Motor neuron (in vitro differentiated cells): ENCODE measurements at regions of chr1 and their contacts with region 1.

Region 1: DNA sequence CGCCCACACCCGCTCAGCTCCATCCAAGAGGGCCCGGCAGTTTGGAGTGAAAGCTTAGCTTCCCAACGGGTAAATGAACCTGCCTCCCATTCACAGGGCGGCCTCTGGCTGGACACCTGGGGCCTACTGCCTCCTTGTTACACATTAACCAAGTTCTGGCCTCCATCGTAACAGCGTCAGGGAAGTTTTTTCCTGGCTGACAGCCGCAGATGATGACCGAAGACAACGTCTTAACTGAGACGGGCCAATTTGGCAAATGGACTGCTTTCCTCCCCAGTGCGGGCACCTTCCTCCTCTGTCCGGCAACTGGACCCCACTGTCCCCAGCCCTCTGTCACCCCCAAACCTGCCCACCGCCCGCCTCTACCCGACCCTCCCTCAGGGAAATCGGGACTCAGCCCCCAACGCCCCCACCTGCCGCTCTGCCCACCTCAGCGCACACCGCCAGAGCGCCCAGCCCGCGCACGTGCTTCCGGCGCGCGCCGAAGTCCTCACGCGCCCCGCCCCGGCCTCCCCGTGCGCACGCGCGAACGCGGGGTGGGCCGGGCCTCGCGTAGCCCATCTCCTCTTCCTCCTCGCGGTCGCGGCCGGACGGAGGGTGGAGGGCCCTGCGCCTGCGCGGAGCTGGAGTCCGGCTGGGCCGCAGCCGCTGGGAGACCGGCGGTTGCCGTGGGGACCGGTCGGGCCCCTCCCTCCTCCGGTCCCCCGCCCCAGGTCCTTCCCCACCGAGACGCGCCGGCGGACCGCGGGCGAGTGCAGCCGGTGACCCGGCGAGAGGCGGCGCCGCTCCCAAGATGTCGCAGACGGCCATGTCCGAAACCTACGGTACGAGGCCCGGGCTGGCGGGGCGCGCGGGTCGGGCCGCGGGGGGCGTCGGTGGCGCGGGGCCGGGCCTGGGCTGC is at the start of gene RAB4A:
- ATAC-seq: peak; percentile 92 to 97 (median 95)
- H3K4me3 ChIP-seq: peak within 1 kb of the TSS; percentile 65 to 81 (median 75)
- H3K27ac ChIP-seq: peak within 1 kb of the TSS; percentile 44 to 74
- H3K4me1 ChIP-seq: peaks cover 17 to 20% of the 10 kb centered on the region in 2 donors
- total RNA-seq, gene RAB4A: 12.9 to 51.6 (median 35.3) TPM

Region 2: GRCh38 chr1:229452956-229453801 is 182.4 kb after region 1 on chr1:
- in situ Hi-C with region 1: loop called in 1 of 9 experiments (anchors 25 kb)
- ATAC-seq: peak in 1 of 8 experiments; percentile 22
- H3K4me3 ChIP-seq: no peak overlapping the region
- H3K27ac ChIP-seq: no peak overlapping the region
- H3K4me1 ChIP-seq: no peaks in the 10 kb centered on the region

Region 3: DNA sequence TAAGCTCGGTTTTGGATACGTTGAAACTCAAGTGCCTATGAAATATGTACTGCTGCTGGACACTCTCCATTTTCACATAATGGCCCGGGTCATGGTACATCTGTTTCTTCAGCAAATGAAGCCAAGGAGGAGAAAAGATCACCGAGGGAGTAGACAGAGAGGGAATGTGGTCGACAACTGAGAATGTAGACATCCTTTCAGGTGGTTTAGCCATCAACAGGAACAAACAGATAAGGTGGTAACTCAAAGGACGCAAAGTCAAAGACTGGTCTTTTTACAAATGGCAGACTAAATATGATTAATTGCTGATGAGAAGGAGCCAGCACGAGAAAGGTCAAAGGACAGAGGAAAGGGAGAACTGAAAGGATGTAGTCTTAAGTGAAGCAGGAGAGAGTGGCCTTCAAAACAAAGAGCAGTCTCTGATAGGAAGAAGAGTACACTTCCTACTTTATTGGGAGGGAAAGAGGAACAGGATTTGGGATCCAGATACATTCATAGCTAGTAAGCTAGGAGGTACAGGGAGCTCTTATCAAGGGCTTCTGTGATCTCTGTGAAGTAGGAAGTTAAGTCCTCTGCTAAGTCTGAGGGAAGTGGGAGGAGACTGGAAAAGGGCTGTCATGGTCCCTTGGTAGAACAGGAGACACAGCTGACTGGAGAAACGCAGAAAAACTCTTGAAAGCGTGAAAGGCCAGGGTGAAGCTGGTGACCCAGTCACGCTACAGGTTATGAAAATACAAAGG is 209.0 kb after region 1 on chr1:
- in situ Hi-C with region 1: loop called in 5 of 9 experiments (anchors 10 to 25 kb)
- ATAC-seq: no peak
- H3K4me3 ChIP-seq: no peak overlapping the region
- H3K27ac ChIP-seq: no peak overlapping the region
- H3K4me1 ChIP-seq: no peaks in the 10 kb centered on the region

Region 4: GRCh38 chr1:229507951-229508822 is 237.4 kb after region 1 on chr1 and contains the start of gene NUP133:
- in situ Hi-C with region 1: loop called in 3 of 9 experiments (anchors 25 kb)
- ATAC-seq: peak; percentile 90 to 98 (median 97)
- H3K4me3 ChIP-seq: peak within 1 kb of the TSS; percentile 93 to 99 (median 95)
- H3K27ac ChIP-seq: peak within 1 kb of the TSS; percentile 91 to 94
- H3K4me1 ChIP-seq: peaks cover 13 to 16% of the 10 kb centered on the region in 2 donors
- total RNA-seq, gene NUP133: 19.2 to 53.7 (median 35.8) TPM

Region 5: DNA sequence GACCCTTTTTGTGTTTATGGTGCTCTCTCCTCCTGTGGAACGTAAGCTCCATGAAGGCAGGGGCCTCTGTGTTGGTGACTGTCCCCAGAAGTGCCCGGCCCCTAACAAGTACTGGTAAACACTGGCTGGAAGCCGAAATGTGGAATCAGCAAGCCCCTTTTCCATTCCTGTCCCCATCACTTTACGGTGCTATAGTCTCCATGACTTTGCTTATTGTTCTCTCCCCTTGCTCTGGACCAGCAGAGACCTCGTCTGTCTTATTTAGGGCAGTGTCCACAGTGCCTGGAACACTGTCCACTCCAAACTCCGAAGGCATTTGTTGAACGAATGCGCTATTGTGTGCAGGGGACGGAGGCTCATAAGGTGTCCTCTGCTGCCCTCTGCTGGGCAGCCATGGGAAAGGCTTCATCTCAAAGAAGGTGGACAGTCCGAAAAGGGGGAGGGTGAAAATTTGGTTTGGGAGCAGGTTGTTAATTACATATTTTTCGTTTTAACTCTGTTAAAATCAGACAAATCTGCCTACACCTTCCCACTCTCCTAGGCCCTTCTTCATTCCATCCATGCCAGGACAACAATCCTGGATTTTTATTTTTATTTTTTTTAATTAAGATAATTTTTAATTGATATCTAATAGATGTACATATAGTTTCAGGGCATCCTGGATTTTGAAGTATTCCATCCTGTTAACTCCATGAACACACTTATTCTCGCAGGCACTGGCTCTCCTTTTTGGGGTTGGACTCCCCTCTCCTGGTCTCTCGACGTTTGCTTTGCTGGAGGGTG is 1039.8 kb after region 1 on chr1:
- in situ Hi-C with region 1: loop called in 3 of 9 experiments (anchors 25 kb)
- ATAC-seq: peak; percentile 68 to 98 (median 94)
- H3K4me3 ChIP-seq: no peak overlapping the region
- H3K27ac ChIP-seq: no peak overlapping the region
- H3K4me1 ChIP-seq: no peaks in the 10 kb centered on the region